Mammary epithelial cell (primary cell): ENCODE measurements at regions of chr15 and their contacts with region 1.

Region 1: GRCh38 chr15:63466378-63467192 is 37.8 kb upstream of the USP3 start:
- DNase-seq: peak; percentile 56
- H3K4me3 ChIP-seq: no peak overlapping the region
- H3K27ac ChIP-seq: no peak overlapping the region
- H3K4me1 ChIP-seq: no peaks in the 10 kb centered on the region
- H3K27me3 ChIP-seq: no peaks in the 10 kb centered on the region
- CTCF ChIP-seq: peak; percentile 56 to 73

Region 2: GRCh38 chr15:63288778-63289378 is 177.7 kb before region 1 on chr15:
- CTCF ChIA-PET with region 1: no interaction called
- dilution Hi-C with region 1: no loop called
- in situ Hi-C with region 1: no loop called
- intact Hi-C with region 1: loop called (anchors 5 kb)
- DNase-seq: peak; percentile 36
- H3K4me3 ChIP-seq: no peak overlapping the region
- H3K27ac ChIP-seq: no peak overlapping the region
- H3K4me1 ChIP-seq: peaks cover 6% of the 10 kb centered on the region
- H3K27me3 ChIP-seq: no peaks in the 10 kb centered on the region
- CTCF ChIP-seq: peak; percentile 59 to 72

Region 3: GRCh38 chr15:63531586-63531985 is 65.0 kb after region 1 on chr15:
- CTCF ChIA-PET with region 1: no interaction called
- dilution Hi-C with region 1: loop called (anchors 5 kb)
- in situ Hi-C with region 1: no loop called
- intact Hi-C with region 1: no loop called
- DNase-seq: no peak
- H3K4me3 ChIP-seq: no peak overlapping the region
- H3K27ac ChIP-seq: no peak overlapping the region
- H3K4me1 ChIP-seq: no peaks in the 10 kb centered on the region
- H3K27me3 ChIP-seq: no peaks in the 10 kb centered on the region
- CTCF ChIP-seq: peak in 1 of 2 donors; percentile 30

Region 4: GRCh38 chr15:63718590-63719035 is 252.0 kb after region 1 on chr15:
- CTCF ChIA-PET with region 1: no interaction called
- dilution Hi-C with region 1: no loop called
- in situ Hi-C with region 1: no loop called
- intact Hi-C with region 1: no loop called
- DNase-seq: peak; percentile 62
- H3K4me3 ChIP-seq: no peak overlapping the region
- H3K27ac ChIP-seq: no peak overlapping the region
- H3K4me1 ChIP-seq: peaks cover 17% of the 10 kb centered on the region
- H3K27me3 ChIP-seq: no peaks in the 10 kb centered on the region
- CTCF ChIP-seq: no peak